PC-3 (cell line): ENCODE measurements at regions of chr14 and their contacts with region 1.

Region 1: DNA sequence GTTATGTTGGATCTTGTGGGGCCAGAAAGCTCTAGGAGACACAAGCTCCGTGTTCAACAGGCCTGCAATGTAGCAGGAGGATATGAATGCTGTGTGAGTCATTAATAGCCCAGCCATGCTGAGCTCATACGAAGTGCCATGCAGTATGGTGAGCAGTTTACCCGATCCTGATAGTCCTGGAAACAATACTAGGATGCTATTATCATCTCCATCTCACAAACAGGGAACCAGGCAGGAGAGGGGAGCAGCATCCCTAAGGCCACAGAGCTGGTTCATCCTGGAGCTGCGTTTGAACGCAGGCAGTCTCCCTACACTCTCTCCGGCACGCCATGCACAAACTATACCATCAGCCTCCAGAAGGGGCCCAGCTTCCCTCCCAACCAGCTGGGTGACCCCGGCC is 20.5 kb downstream of the TTC7B start:
- DNase-seq: peak; percentile 91
- ATAC-seq: peak; percentile 100
- H3K4me3 ChIP-seq: no peak overlapping the region
- H3K27ac ChIP-seq: peak overlapping the region; percentile 72
- H3K4me1 ChIP-seq: peaks cover 16% of the 10 kb centered on the region
- H3K27me3 ChIP-seq: no peaks in the 10 kb centered on the region
- CTCF ChIP-seq: no peak

Region 2: DNA sequence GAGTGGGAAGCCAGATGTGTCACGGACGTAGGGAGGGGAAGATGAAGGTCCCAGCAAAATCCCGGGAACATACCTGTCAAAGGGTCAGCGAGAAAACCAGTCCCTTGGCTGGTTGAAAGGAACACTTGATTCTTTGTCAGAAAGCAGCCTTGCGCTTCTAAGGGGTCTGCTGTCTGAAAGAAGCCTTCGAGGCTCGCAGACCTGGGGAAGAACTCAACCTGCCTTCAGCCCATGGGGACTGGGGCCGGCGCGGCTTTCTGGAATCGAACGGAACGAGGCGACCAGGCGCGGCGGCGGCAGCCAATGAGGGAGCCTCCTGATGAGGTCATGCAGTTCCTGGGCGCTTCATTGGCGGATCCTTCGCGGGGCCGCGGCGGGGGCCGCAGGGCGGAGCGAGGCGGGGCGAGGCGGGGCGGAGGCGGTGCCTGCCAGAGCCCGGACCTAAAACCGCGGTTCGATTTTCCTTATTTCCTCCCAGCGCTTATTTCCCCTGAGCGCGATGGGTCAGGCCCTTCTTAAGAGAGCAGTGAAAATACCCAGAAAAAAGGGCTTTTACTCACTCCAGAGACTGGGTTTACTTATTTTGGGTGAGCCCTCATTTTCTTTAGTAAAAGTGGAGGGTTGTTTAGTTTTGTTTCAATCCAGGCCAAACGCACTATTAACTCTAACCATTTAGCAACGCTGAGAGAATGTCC is 32.3 kb after region 1 on chr14:
- CTCF ChIA-PET with region 1: interaction called, 3 read pairs
- POLR2A ChIA-PET with region 1: no interaction called
- intact Hi-C with region 1: loop called (anchors 1 kb)
- DNase-seq: peak; percentile 91
- ATAC-seq: peak; percentile 100
- H3K4me3 ChIP-seq: peak overlapping the region; percentile 61
- H3K27ac ChIP-seq: no peak overlapping the region
- H3K4me1 ChIP-seq: peaks cover 10% of the 10 kb centered on the region
- H3K27me3 ChIP-seq: no peaks in the 10 kb centered on the region
- CTCF ChIP-seq: no peak